ENCODE measurements at regions of chr4 and their contacts with region 1.

Region 1: GRCh38 chr4:157045507-157046127 is 30.3 kb upstream of the GLRB start:
- DNase-seq: peak; percentile 22
- H3K4me3 ChIP-seq: no peak overlapping the region
- H3K27ac ChIP-seq: no peak overlapping the region
- H3K4me1 ChIP-seq: no peaks in the 10 kb centered on the region
- H3K27me3 ChIP-seq: no peaks in the 10 kb centered on the region
- CTCF ChIP-seq: peak in 3 of 4 experiments; percentile 62 to 80 (median 72)
- POLR2A ChIP-seq: no peak

Region 2: GRCh38 chr4:156487107-156487506 is 558.5 kb before region 1 on chr4:
- intact Hi-C with region 1: loop called (anchors 10 kb)
- DNase-seq: no peak
- H3K4me3 ChIP-seq: no peak overlapping the region
- H3K27ac ChIP-seq: no peak overlapping the region
- H3K4me1 ChIP-seq: no peaks in the 10 kb centered on the region
- H3K27me3 ChIP-seq: no peaks in the 10 kb centered on the region
- CTCF ChIP-seq: no peak
- POLR2A ChIP-seq: no peak

Region 3: GRCh38 chr4:156763511-156763910 is 282.1 kb before region 1 on chr4:
- intact Hi-C with region 1: loop called (anchors 10 kb)
- DNase-seq: no peak
- H3K4me3 ChIP-seq: no peak overlapping the region
- H3K27ac ChIP-seq: no peak overlapping the region
- H3K4me1 ChIP-seq: no peaks in the 10 kb centered on the region
- H3K27me3 ChIP-seq: no peaks in the 10 kb centered on the region
- CTCF ChIP-seq: no peak
- POLR2A ChIP-seq: no peak

Region 4: DNA sequence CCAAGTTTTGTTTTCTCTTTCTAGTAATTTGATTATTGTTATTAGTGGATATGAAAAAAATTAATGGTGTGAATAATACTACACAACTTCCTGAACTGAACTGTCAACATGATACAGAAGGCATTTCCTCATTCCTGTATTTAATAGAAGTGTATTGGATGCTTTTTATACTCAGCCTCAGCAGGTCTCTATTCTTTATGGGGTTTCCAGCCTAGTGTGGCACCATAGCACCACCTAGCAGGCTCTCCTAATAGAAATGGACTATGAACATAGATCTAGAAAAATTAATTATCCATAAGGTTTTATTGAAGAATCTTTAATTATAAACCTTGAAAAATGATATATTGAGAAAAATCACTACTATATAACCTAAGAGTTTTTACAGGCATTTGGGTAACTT is 82.8 kb after region 1 on chr4:
- intact Hi-C with region 1: loop called (anchors 5 kb)
- DNase-seq: no peak
- H3K4me3 ChIP-seq: no peak overlapping the region
- H3K27ac ChIP-seq: no peak overlapping the region
- H3K4me1 ChIP-seq: no peaks in the 10 kb centered on the region
- H3K27me3 ChIP-seq: no peaks in the 10 kb centered on the region
- CTCF ChIP-seq: peak in 1 of 4 experiments; percentile 42
- POLR2A ChIP-seq: no peak